Activated CD8-positive, alpha-beta memory T cell treated with anti-CD3 and anti-CD28 coated beads, Interleukin-2, amount 10 ng/mL, durations not matched to agents 7 days and 5 days (primary cell): ENCODE measurements at regions of chr14 and their contacts with region 1.

Region 1: DNA sequence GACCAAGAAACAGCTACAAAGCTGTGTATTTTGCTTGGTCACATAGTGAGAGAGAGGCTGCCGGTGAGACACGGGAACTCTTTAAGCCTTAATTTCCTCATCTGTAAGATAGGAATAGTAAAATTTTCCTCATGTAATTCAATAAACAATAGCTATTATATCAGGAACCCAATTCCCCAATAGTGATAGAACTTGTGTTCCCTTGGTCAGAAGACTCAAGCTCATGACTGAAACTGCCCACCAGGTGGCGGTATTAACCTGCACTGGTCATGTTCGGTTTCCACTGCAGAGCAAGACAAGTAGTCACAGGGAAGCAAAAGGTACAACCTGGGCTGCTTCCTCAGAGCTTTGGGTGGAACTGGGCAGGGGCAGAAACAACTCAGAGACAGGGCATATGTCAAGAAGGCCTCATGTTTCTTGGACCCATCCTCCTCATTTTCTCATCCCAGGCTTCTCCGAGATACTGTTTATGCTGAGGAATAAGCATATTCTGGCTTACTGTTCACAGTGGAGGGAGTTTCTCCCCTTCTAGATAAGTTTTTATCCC is 4.2 kb upstream of the AJUBA start:
- DNase-seq: peak; percentile 93
- ATAC-seq: peak; percentile 62
- H3K4me3 Mint-ChIP-seq: no peak overlapping the region
- H3K27ac Mint-ChIP-seq: no peak overlapping the region
- H3K4me1 Mint-ChIP-seq: no peaks in the 10 kb centered on the region
- H3K27me3 Mint-ChIP-seq: no peaks in the 10 kb centered on the region

Region 2: DNA sequence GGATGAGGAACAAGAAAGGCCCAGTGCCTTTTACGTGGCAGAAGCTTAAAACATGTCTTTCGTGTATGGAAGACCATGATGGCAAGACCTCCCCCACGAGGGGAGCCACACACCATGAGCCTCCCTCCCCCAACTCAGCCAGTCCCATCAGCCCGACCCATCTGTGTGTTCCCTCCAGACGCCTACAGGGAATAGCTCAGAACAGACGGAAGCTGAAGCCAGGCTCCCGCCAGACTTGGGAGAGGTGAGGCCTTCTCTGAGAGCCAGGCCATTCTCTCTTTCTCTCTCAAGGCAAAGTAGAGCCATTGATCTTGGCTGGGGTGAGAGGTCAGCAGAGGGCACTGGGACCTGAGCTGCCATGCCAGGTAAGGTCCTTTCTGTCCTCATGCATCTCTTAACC is 94.1 kb before region 1 on chr14:
- CTCF ChIA-PET with region 1: no interaction called
- DNase-seq: no peak
- ATAC-seq: no peak
- H3K4me3 Mint-ChIP-seq: no peak overlapping the region
- H3K27ac Mint-ChIP-seq: no peak overlapping the region
- H3K4me1 Mint-ChIP-seq: peaks cover 20% of the 10 kb centered on the region
- H3K27me3 Mint-ChIP-seq: no peaks in the 10 kb centered on the region

Region 3: GRCh38 chr14:22929104-22929847 is 57.3 kb before region 1 on chr14 and contains the start of gene PRMT5:
- CTCF ChIA-PET with region 1: interaction called, 44 read pairs
- DNase-seq: peak; percentile 98
- ATAC-seq: peak; percentile 97
- H3K4me3 Mint-ChIP-seq: no peak within 1 kb of the TSS
- H3K27ac Mint-ChIP-seq: no peak within 1 kb of the TSS
- H3K4me1 Mint-ChIP-seq: peaks cover 32% of the 10 kb centered on the region
- H3K27me3 Mint-ChIP-seq: no peaks in the 10 kb centered on the region
- total RNA-seq, gene PRMT5: 49.2 to 84.0 TPM

Region 4: DNA sequence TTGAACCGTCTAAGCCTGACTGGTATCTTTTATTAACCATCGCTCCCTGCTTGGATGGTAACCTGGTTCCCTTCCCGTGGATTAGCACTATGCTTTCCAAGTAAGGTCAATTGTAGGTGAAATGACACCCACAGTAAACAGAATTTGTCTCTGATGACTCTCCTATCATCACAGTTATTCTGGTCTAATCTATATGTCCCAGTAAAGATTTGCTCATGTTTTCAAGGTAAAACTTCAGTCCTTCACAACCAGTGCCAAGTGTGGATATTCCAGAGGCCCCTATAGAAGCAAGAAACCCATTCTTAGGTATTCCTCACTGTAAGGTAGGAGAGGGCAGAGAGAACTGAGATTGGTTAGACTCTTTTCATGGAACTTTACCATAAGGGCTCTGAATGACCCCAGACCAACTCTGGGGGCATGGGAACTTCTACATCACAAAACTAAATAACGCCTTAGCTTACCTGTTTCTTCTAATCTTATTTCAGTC is 19.8 kb before region 1 on chr14:
- CTCF ChIA-PET with region 1: interaction called, 200 read pairs
- DNase-seq: no peak
- ATAC-seq: no peak
- H3K4me3 Mint-ChIP-seq: no peak overlapping the region
- H3K27ac Mint-ChIP-seq: no peak overlapping the region
- H3K4me1 Mint-ChIP-seq: no peaks in the 10 kb centered on the region
- H3K27me3 Mint-ChIP-seq: peaks cover 11% of the 10 kb centered on the region

Region 5: GRCh38 chr14:23000860-23001259 is 14.3 kb after region 1 on chr14:
- CTCF ChIA-PET with region 1: interaction called, 101 read pairs
- DNase-seq: no peak
- ATAC-seq: no peak
- H3K4me3 Mint-ChIP-seq: no peak overlapping the region
- H3K27ac Mint-ChIP-seq: no peak overlapping the region
- H3K4me1 Mint-ChIP-seq: peaks cover 7% of the 10 kb centered on the region
- H3K27me3 Mint-ChIP-seq: no peaks in the 10 kb centered on the region

Region 6: GRCh38 chr14:23025151-23025814 is 38.7 kb after region 1 on chr14:
- CTCF ChIA-PET with region 1: interaction called, 13 read pairs
- DNase-seq: no peak
- ATAC-seq: no peak
- H3K4me3 Mint-ChIP-seq: no peak overlapping the region
- H3K27ac Mint-ChIP-seq: peak overlapping the region; percentile 9
- H3K4me1 Mint-ChIP-seq: peaks cover 25% of the 10 kb centered on the region
- H3K27me3 Mint-ChIP-seq: no peaks in the 10 kb centered on the region

Region 7: GRCh38 chr14:23057757-23058653 is 71.4 kb after region 1 on chr14:
- CTCF ChIA-PET with region 1: interaction called, 867 read pairs
- DNase-seq: peak; percentile 92
- ATAC-seq: peak; percentile 77
- H3K4me3 Mint-ChIP-seq: peak overlapping the region; percentile 77
- H3K27ac Mint-ChIP-seq: no peak overlapping the region
- H3K4me1 Mint-ChIP-seq: peaks cover 16% of the 10 kb centered on the region
- H3K27me3 Mint-ChIP-seq: peaks cover 8% of the 10 kb centered on the region

Region 8: GRCh38 chr14:23095196-23096108 is 108.9 kb after region 1 on chr14 and contains the start of gene C14orf119:
- CTCF ChIA-PET with region 1: interaction called, 12 read pairs
- DNase-seq: peak; percentile 100
- ATAC-seq: peak; percentile 94
- H3K4me3 Mint-ChIP-seq: no peak within 1 kb of the TSS
- H3K27ac Mint-ChIP-seq: no peak within 1 kb of the TSS
- H3K4me1 Mint-ChIP-seq: peaks cover 36% of the 10 kb centered on the region
- H3K27me3 Mint-ChIP-seq: no peaks in the 10 kb centered on the region
- total RNA-seq, gene C14orf119: 44.6 to 53.2 TPM

Region 9: DNA sequence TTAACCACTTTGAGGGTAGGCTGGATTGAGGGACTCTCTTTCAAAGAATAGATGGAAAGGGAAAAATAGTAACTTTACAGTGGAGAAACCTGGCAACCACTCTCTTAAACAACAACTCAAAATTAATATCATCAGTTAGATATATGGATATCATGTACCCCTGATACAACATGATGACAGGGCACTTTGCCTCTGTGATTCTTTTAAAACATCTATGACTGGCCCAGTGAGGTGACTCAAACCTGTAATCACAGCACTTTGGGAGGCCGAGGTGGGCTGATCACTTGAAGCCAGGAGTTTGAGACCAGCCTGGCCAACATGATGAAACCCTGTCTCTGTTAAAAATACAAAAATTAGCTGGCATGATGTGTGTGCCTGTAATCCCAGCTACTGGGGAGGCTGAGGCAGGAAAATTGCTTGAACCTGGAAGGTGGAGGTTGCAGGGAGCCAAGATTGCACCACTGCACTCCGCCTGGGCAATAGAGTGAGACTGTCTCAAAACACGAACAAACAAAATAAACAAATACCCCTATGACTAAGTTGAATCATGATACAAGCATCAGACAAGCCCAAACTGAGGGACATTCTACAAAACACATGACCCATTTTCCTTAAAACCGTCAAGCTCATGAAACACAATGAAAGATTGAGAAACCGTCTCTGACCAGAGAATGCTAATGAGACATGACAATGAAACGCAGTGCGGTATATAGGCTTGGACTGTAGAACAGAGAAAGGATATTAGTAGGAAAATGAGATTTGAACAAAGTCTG is 223.3 kb after region 1 on chr14:
- CTCF ChIA-PET with region 1: no interaction called
- DNase-seq: no peak
- ATAC-seq: no peak
- H3K4me3 Mint-ChIP-seq: no peak overlapping the region
- H3K27ac Mint-ChIP-seq: no peak overlapping the region
- H3K4me1 Mint-ChIP-seq: no peaks in the 10 kb centered on the region
- H3K27me3 Mint-ChIP-seq: peaks cover 37% of the 10 kb centered on the region